ENCODE measurements at regions of chr9 and their contacts with region 1.

Region 1: GRCh38 chr9:136488247-136489214 is 5.7 kb upstream of the SEC16A start:
- DNase-seq: peak; percentile 81
- H3K4me3 ChIP-seq: peak overlapping the region in 1 of 2 experiments; percentile 55; a peak in 1 of 4 replicates
- H3K27ac ChIP-seq: no peak overlapping the region
- H3K4me1 ChIP-seq: peaks cover 0 to 16% of the 10 kb centered on the region in 2 experiments; a peak in 1 of 4 replicates
- H3K27me3 ChIP-seq: no peaks in the 10 kb centered on the region
- CTCF ChIP-seq: peak; percentile 99
- EP300 ChIP-seq: no peak
- RAD21 ChIP-seq: peak; percentile 94

Region 2: DNA sequence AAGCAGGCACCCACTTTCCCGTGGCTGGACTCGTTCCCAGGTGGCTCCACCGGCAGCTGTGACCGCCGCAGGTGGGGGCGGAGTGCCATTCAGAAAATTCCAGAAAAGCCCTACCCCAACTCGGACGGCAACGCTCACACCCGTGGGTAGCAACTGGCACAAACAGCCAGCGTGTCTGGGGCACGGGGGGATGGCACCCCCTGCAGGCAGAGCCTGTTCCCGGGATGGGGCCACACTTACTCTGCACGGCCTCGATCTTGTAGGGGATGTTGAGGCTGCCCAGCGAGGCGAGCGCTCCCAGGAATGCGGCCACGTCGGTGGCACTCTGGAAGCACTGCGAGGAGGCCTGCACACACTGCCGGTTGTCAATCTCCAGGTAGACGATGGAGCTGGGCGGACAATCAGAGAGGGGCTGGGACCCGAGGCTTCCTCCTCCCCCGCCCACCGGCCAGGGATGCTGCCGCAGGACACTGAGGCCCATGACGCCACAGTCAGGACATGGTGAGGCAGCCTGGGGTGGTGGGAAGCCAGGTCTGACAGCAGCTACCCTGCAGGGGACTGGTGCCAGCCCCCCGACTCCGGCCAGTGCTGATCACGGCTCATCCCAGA is 14.5 kb after region 1 on chr9:
- CTCF ChIA-PET with region 1: interaction called, 54 read pairs
- POLR2A ChIA-PET with region 1: no interaction called
- DNase-seq: no peak
- H3K4me3 ChIP-seq: no peak overlapping the region
- H3K27ac ChIP-seq: no peak overlapping the region
- H3K4me1 ChIP-seq: no peaks in the 10 kb centered on the region
- H3K27me3 ChIP-seq: no peaks in the 10 kb centered on the region
- CTCF ChIP-seq: peak; percentile 19; the same call in 1 of the 2 replicates
- EP300 ChIP-seq: no peak
- RAD21 ChIP-seq: no peak

Region 3: DNA sequence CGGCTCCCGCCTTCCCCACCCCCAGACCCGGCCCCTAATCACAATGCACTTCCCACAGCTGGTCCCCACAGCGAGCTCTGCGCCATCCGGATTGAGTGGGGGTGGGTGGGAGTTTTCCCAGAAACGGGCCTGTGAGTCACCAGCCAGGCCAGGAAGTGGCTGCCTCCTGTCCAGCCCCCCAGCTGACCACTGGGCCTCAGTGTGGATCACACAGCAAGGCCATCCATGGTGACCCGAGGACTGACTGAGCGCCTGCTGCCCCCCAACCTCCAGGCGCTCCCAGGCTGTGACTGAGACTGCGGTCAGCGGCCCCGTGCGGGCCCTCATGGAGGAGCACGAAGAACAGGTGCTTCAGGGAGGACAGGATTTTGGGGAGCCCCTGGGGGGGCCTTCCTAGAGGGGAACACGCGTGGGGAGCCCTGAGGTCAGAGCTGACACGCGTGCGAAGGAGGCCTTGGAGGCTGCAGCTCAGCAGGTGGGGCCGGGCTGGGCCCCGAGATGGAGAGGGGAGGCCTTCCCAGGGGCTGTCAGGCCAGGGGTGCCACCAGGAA is 125.9 kb after region 1 on chr9:
- CTCF ChIA-PET with region 1: interaction called, 63 read pairs
- POLR2A ChIA-PET with region 1: no interaction called
- DNase-seq: peak; percentile 69
- H3K4me3 ChIP-seq: no peak overlapping the region; a peak in 1 of 4 replicates
- H3K27ac ChIP-seq: no peak overlapping the region
- H3K4me1 ChIP-seq: peaks cover 9 to 11% of the 10 kb centered on the region in 2 experiments; a peak in 3 of 4 replicates
- H3K27me3 ChIP-seq: no peaks in the 10 kb centered on the region
- CTCF ChIP-seq: no peak
- EP300 ChIP-seq: peak in 1 of 2 experiments; percentile 63; a peak in 2 of 4 replicates
- RAD21 ChIP-seq: no peak

Region 4: DNA sequence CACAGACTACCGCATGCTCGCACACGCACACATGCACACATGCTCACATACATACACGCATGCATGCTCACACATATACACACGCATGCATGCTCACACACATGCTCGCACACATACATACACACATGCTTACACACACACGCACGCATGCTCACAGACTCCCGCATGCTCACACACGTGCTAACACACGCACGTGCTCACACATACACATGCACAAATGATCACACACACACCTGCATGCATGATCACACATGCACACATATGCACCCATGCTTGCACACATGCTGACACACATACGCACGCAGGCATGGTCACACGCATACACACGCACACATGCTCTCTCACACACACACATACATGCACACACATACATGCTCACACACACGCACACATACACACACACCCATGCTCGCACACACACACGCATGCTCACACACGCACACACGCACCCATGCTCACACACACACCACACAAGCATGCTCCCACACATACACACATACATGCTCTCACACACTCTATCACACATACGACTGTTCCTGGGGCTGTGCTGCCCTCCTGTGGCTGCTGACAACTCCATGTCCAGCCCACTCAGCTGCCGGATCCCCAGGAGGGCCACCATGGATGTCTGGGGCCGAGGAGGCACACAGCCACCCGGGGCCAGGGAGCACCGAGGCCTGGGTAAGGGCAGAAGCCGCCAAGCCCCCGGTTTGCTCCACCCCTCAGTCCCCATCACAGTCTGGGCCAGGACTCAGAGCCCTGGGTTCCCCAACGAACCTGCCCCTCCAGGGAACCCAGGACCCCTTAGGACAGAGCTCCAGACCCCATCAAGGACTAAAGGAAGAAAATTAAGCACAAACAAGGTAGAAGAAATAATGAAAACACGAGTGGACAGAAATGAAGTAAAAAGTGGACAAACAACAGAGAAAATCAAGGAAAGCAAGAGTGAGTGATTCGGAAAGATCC is 142.8 kb after region 1 on chr9:
- CTCF ChIA-PET with region 1: interaction called, 320 read pairs
- POLR2A ChIA-PET with region 1: interaction called, 4 read pairs
- DNase-seq: peak; percentile 90
- H3K4me3 ChIP-seq: no peak overlapping the region; a peak in 1 of 4 replicates
- H3K27ac ChIP-seq: no peak overlapping the region
- H3K4me1 ChIP-seq: peaks cover 0 to 8% of the 10 kb centered on the region in 2 experiments; a peak in 1 of 4 replicates
- H3K27me3 ChIP-seq: peaks cover 15% of the 10 kb centered on the region
- CTCF ChIP-seq: peak; percentile 84
- EP300 ChIP-seq: no peak
- RAD21 ChIP-seq: peak; percentile 94

Region 5: GRCh38 chr9:136655536-136656182 is 167.1 kb after region 1 on chr9:
- CTCF ChIA-PET with region 1: interaction called, 11 read pairs
- POLR2A ChIA-PET with region 1: no interaction called
- DNase-seq: no peak
- H3K4me3 ChIP-seq: no peak overlapping the region
- H3K27ac ChIP-seq: peak overlapping the region in 1 of 2 experiments; percentile 60; a peak in 2 of 4 replicates
- H3K4me1 ChIP-seq: peaks cover 5 to 11% of the 10 kb centered on the region in 2 experiments; a peak in 2 of 4 replicates
- H3K27me3 ChIP-seq: no peaks in the 10 kb centered on the region
- CTCF ChIP-seq: no peak
- EP300 ChIP-seq: no peak
- RAD21 ChIP-seq: no peak

Measured in SK-N-SH (cell line).